Activated T-helper 1 cell treated with anti-CD3 and anti-CD28 coated beads, Interleukin-12 subunit alpha, Interleukin-12 subunit beta, Interleukin-2, Interleukin-4 antibody, amounts not matched to agents 30 ng/mL and 10 ng/mL and 1 ng/mL, durations not matched to agents 14 hours and 24 hours and 36 hours (primary cell): ENCODE measurements at regions of chr6 and their contacts with region 1.

Region 1: GRCh38 chr6:116969211-116969863 is 92.3 kb downstream of the RFX6 start:
- DNase-seq: no peak
- H3K4me3 Mint-ChIP-seq: no peak overlapping the region
- H3K27ac Mint-ChIP-seq: no peak overlapping the region
- H3K4me1 Mint-ChIP-seq: no peaks in the 10 kb centered on the region
- H3K27me3 Mint-ChIP-seq: no peaks in the 10 kb centered on the region

Region 2: DNA sequence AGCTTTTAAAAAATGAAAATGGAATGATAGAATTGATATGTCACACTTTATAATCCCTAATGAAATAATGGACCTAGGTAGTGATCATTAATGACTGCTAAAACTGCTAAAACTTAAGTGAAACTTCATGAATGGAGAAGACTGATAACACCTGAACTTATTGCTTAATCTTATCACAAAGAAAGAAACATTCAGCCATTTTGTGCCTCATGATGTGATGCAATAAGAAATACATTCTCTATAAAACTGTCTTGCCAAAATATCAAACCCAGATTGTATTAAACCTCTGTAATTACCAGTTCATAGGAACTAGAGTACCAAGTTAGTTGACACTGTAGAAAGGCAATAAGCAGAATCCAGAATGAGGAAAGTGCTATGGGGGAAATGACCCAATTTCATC is 789.0 kb before region 1 on chr6:
- intact Hi-C with region 1: no loop called
- DNase-seq: no peak
- H3K4me3 Mint-ChIP-seq: no peak overlapping the region
- H3K27ac Mint-ChIP-seq: no peak overlapping the region
- H3K4me1 Mint-ChIP-seq: no peaks in the 10 kb centered on the region
- H3K27me3 Mint-ChIP-seq: no peaks in the 10 kb centered on the region

Region 3: DNA sequence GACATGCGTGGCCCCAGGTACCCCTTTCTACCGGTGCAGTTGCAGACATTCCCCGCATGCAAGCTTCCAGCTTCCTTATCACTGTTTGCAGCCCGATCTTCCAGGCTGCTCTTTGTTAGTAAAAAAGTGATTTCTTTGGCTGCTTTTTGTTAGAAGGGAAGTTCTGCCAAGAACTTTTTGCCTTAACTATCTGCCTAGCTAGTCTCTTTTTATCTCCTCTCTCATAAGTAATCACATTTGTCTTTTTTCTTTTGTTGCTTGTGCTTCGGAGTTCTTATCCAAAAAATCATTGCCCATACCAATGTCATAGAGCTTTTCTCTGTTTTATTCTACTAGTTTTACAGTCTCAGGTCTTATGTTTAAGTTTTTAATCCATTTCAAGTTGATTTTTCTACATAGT is 224.2 kb before region 1 on chr6:
- intact Hi-C with region 1: no loop called
- DNase-seq: no peak
- H3K4me3 Mint-ChIP-seq: no peak overlapping the region
- H3K27ac Mint-ChIP-seq: no peak overlapping the region
- H3K4me1 Mint-ChIP-seq: no peaks in the 10 kb centered on the region
- H3K27me3 Mint-ChIP-seq: peaks cover 9% of the 10 kb centered on the region

Region 4: DNA sequence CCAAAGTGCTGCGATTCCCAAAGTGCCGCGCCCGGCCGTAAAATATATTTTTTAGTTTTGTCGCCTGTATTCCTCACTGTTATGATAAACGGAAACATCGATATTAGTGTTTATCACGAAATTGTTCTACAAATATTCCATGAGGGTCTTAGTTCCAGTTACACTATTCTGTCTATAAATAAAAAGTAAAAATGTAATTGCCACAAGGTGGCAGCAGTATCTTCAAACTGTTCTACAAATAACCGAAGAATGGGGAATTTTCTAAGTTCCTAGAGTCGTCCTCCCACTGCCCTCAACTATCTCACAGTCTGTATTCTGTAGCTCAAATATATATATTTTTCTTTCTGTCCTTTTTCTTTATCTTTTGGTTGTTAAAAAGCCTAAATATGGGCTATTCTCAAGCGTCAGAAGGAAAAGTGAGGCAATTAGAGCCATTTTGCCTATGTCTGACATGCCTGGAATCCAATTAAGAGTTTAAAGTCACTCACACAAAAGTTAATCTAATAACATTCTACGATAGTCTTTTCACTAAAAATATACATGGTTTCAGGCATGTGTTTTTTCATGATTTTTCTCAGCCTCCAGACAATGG is 189.7 kb before region 1 on chr6:
- intact Hi-C with region 1: loop called (anchors 1 kb)
- DNase-seq: no peak
- H3K4me3 Mint-ChIP-seq: no peak overlapping the region
- H3K27ac Mint-ChIP-seq: no peak overlapping the region
- H3K4me1 Mint-ChIP-seq: no peaks in the 10 kb centered on the region
- H3K27me3 Mint-ChIP-seq: peaks cover 5% of the 10 kb centered on the region

Region 5: DNA sequence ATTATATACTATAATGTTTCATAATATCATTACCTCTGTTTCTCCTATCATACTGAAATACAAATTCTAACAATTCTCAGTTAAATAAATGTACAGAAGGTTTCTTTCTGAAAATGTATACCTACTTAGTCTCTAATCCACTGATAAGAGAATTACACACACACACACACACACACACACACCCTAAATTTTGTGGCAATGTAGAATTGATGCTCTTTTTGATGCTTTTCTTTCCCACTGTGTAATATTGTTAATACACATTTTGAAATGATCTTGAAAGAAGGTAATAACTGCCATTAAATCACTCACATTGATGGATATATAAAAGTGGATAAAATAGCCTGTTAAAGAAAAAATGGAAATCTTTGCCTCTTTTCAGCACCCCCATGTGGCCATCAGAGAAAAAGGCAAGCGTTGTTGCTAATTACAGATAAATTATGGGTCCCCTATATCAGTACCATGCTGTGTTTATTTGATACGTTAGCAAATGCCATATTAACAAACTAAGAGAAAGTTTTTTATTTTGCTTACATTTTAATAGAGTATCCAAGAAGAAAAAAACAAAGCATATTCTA is 219.4 kb after region 1 on chr6:
- intact Hi-C with region 1: loop called (anchors 2 kb)
- DNase-seq: no peak
- H3K4me3 Mint-ChIP-seq: no peak overlapping the region
- H3K27ac Mint-ChIP-seq: no peak overlapping the region
- H3K4me1 Mint-ChIP-seq: no peaks in the 10 kb centered on the region
- H3K27me3 Mint-ChIP-seq: no peaks in the 10 kb centered on the region